H1 (cell line): ENCODE measurements at regions of chr1 and their contacts with region 1.

Region 1: GRCh38 chr1:207619871-207620542 is 24.9 kb upstream of the CR1L start:
- DNase-seq: no peak
- H3K4me3 ChIP-seq: no peak overlapping the region
- H3K27ac ChIP-seq: no peak overlapping the region
- H3K4me1 ChIP-seq: peaks cover 0 to 7% (median 3%) of the 10 kb centered on the region in 4 experiments; a peak in 1 of 7 replicates
- H3K27me3 ChIP-seq: no peaks in the 10 kb centered on the region
- CTCF ChIP-seq: peak in 2 of 3 experiments; percentile 53 to 80; a peak in 3 of 4 replicates
- EP300 ChIP-seq: no peak
- POLR2A ChIP-seq: no peak
- RAD21 ChIP-seq: peak; percentile 42 to 58

Region 2: DNA sequence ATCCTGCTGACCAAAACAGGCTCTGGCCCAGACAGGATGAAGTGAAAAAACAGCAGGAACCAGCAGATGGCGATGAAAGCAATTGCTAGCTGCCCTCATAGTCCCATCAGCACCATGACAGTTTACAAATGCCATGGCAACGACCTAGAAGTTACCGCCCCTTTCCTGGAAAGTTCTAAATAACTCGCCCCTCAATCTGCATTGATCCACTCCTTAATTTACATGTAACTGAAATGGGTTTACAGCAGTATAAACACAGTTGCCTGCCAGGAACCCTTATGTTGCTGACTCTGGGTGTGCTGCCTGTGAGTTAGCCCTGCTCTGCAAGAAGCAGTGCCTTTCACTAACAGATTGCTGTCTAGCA is 40.6 kb before region 1 on chr1:
- CTCF ChIA-PET with region 1: interaction called, 17 read pairs
- POLR2A ChIA-PET with region 1: no interaction called
- DNase-seq: peak; percentile 36 to 72
- H3K4me3 ChIP-seq: no peak overlapping the region
- H3K27ac ChIP-seq: no peak overlapping the region
- H3K4me1 ChIP-seq: peaks cover 0 to 4% (median 3%) of the 10 kb centered on the region in 4 experiments; a peak in 3 of 7 replicates
- H3K27me3 ChIP-seq: no peaks in the 10 kb centered on the region
- CTCF ChIP-seq: peak; percentile 43 to 86 (median 78)
- EP300 ChIP-seq: no peak
- POLR2A ChIP-seq: no peak
- RAD21 ChIP-seq: peak; percentile 64 to 72

Region 3: GRCh38 chr1:207603777-207604176 is 16.2 kb before region 1 on chr1:
- CTCF ChIA-PET with region 1: interaction called, 77 read pairs
- POLR2A ChIA-PET with region 1: no interaction called
- DNase-seq: no peak
- H3K4me3 ChIP-seq: no peak overlapping the region
- H3K27ac ChIP-seq: no peak overlapping the region
- H3K4me1 ChIP-seq: no peaks in the 10 kb centered on the region
- H3K27me3 ChIP-seq: no peaks in the 10 kb centered on the region
- CTCF ChIP-seq: no peak
- EP300 ChIP-seq: no peak
- POLR2A ChIP-seq: no peak
- RAD21 ChIP-seq: no peak

Region 4: DNA sequence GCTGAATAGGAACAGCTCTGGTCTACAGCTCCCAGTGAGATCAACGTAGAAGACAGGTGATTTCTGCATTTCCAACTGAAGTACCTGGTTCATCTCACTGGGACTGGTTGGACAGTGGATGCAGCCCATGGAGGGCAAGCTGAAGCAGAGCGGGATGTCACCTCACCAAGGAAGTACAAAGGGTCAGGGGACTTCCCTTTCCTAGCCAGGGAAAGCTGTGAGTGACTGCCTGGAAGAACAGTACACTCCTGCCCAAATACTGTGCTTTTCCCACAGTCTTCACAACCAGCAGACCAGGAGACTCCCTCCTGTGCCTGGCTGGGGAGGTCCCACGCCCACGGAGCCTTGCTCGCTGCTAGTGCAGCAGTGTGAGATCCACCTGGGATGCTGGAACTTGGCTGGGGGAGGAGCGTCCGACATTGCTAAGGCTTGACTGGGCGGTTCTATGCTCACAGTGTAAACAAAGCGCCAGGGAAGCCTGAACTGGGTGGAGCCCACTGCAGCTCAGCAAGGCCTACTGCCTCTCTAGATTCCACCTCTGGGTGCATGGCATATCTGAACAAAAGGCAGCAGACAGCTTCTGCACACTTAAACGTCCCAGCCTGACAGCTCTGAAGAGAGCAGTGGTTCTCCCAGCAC is 39.7 kb after region 1 on chr1:
- CTCF ChIA-PET with region 1: interaction called, 11 read pairs
- POLR2A ChIA-PET with region 1: no interaction called
- DNase-seq: no peak
- H3K4me3 ChIP-seq: no peak overlapping the region
- H3K27ac ChIP-seq: no peak overlapping the region
- H3K4me1 ChIP-seq: no peaks in the 10 kb centered on the region
- H3K27me3 ChIP-seq: no peaks in the 10 kb centered on the region
- CTCF ChIP-seq: no peak
- EP300 ChIP-seq: no peak
- POLR2A ChIP-seq: no peak
- RAD21 ChIP-seq: no peak